T-cell (primary cell): ENCODE measurements at regions of chr12 and their contacts with region 1.

Region 1: GRCh38 chr12:6272300-6273204 is 37.9 kb upstream of the PLEKHG6 start:
- DNase-seq: no peak
- ATAC-seq: no peak
- H3K4me3 ChIP-seq: no peak overlapping the region
- H3K4me3 Mint-ChIP-seq: no peak overlapping the region
- H3K27ac ChIP-seq: no peak overlapping the region
- H3K27ac Mint-ChIP-seq: no peak overlapping the region
- H3K4me1 ChIP-seq: no peaks in the 10 kb centered on the region
- H3K4me1 Mint-ChIP-seq: no peaks in the 10 kb centered on the region
- H3K27me3 ChIP-seq: peaks cover 0 to 38% of the 10 kb centered on the region in 2 experiments
- H3K27me3 Mint-ChIP-seq: peaks cover 5 to 29% of the 10 kb centered on the region in 2 donors

Region 2: GRCh38 chr12:6360080-6360571 is 87.6 kb after region 1 on chr12:
- CTCF ChIA-PET with region 1: interaction called in 1 of 2 experiments, 11 read pairs
- POLR2A ChIA-PET with region 1: no interaction called
- DNase-seq: no peak
- ATAC-seq: no peak
- H3K4me3 ChIP-seq: no peak overlapping the region
- H3K4me3 Mint-ChIP-seq: peak overlapping the region in 1 of 3 donors; percentile 4
- H3K27ac ChIP-seq: no peak overlapping the region
- H3K27ac Mint-ChIP-seq: peak overlapping the region; percentile 24 to 66
- H3K4me1 ChIP-seq: peaks cover 14 to 32% of the 10 kb centered on the region in 2 experiments
- H3K4me1 Mint-ChIP-seq: peaks cover 18 to 38% (median 31%) of the 10 kb centered on the region in 3 donors
- H3K27me3 ChIP-seq: peaks cover 0 to under 1% of the 10 kb centered on the region in 2 experiments
- H3K27me3 Mint-ChIP-seq: no peaks in the 10 kb centered on the region